ENCODE measurements at regions of chr20 and their contacts with region 1.

Region 1: DNA sequence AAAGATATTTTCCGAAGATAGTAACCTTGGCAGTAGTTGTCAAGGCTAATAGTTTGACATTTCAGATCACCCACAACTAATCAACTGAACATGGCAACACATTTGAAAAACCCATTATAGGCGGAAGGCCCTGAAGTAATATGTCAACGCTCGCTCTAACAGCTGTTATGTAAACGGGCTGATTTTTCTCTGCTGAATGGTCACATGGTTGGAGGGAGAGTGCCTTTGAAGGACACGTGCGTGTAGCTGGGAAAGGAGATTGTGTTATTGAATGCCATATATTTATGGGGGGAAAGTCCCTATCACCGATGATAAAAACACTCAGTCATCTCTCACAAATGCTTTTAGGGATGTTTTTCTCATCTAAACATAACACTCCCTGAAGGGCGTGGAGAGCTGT is 160.0 kb upstream of the RALGAPA2 start:
- DNase-seq: no peak

Region 2: DNA sequence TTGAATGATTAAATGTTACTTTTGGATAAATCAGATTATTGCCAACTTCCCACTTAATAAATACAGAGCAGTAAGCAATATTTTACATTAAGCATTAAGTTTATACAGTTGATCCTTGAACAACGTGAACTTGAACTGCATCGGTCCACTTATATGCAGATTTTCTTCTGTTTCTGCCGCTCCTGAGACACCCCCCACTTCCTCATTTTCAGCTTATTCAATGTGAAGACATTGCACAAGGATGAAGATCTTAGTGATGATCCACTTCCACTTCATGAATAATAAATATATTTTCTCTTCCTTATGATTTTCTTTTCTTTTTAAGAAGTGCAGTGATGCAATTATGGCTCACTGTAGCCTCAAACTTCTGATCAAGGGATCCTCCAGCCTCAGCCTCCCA is 66.6 kb after region 1 on chr20:
- intact Hi-C with region 1: no loop called
- DNase-seq: no peak

Region 3: GRCh38 chr20:21048841-21049273 is 176.4 kb after region 1 on chr20:
- intact Hi-C with region 1: loop called (anchors 10 kb)
- DNase-seq: peak in 4 of 10 donors; percentile 6 to 74 (median 64)

Region 4: GRCh38 chr20:21656308-21657073 is 784.1 kb after region 1 on chr20:
- intact Hi-C with region 1: no loop called
- DNase-seq: no peak

Measured in posterior cingulate gyrus (tissue), 11 donors.